Activated naive CD4-positive, alpha-beta T cell treated with anti-CD3 and anti-CD28 coated beads for 36 hours (primary cell): ENCODE measurements at regions of chr2 and their contacts with region 1.

Region 1: GRCh38 chr2:179031731-179032408 is 18.1 kb downstream of the CCDC141 start:
- DNase-seq: peak; percentile 71
- H3K4me3 Mint-ChIP-seq: peak overlapping the region; percentile 61
- H3K27ac Mint-ChIP-seq: peak overlapping the region; percentile 87
- H3K4me1 Mint-ChIP-seq: peaks cover 32% of the 10 kb centered on the region
- H3K27me3 Mint-ChIP-seq: no peaks in the 10 kb centered on the region

Region 2: DNA sequence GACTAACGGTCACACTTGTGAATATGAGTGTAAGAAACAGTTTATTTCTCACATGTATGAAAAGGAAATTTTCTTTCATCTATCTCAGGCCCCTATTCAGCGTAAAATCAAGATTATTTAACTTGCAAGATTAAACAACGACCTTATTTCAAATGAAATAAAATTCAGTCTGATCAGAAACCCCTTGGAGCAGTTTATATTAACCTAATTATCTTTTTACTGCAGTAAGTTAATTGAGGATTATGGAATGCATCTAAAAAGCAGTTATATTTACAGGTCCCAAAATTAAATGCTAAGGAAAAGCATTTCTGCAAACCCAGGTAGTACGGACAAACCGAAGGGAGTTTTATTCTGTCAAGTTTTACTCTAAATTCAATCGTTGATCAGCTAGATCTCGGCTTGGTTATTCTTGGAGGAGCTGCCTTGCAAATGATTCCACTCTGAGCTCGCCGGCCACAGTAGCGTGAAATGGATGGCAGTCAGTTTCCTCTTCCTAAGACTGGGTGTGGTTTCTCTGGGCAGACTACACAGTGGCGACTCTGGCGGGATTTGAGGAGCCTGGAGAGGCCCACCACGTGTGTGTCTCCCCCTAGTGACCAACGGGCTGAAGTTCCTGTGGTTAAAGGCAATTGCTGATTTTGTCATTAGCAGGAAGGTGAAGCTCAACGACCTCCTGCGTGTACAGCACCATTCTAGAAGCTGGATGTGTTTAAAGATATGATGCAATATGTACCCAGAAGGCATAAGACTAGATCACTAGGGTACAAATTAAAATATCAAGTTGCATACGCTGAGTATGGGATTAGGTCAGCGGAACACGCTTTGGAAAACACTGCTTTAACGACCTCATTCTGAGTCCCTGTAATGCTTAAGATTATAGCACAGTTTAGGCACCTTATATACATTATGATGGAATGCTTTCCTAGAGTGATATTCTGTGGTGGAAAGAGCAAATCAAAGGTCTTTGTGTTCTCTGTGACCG is 617.3 kb before region 1 on chr2:
- CTCF ChIA-PET with region 1: no interaction called
- intact Hi-C with region 1: loop called (anchors 5 kb)
- DNase-seq: peak; percentile 93
- H3K4me3 Mint-ChIP-seq: peak overlapping the region; percentile 79
- H3K27ac Mint-ChIP-seq: peak overlapping the region; percentile 90
- H3K4me1 Mint-ChIP-seq: peaks cover 12% of the 10 kb centered on the region
- H3K27me3 Mint-ChIP-seq: no peaks in the 10 kb centered on the region

Region 3: GRCh38 chr2:178514664-178515063 is 517.2 kb before region 1 on chr2:
- CTCF ChIA-PET with region 1: interaction called, 3 read pairs
- intact Hi-C with region 1: loop called (anchors 1 kb)
- DNase-seq: peak; percentile 69
- H3K4me3 Mint-ChIP-seq: no peak overlapping the region
- H3K27ac Mint-ChIP-seq: peak overlapping the region; percentile 65
- H3K4me1 Mint-ChIP-seq: peaks cover 25% of the 10 kb centered on the region
- H3K27me3 Mint-ChIP-seq: no peaks in the 10 kb centered on the region

Region 4: DNA sequence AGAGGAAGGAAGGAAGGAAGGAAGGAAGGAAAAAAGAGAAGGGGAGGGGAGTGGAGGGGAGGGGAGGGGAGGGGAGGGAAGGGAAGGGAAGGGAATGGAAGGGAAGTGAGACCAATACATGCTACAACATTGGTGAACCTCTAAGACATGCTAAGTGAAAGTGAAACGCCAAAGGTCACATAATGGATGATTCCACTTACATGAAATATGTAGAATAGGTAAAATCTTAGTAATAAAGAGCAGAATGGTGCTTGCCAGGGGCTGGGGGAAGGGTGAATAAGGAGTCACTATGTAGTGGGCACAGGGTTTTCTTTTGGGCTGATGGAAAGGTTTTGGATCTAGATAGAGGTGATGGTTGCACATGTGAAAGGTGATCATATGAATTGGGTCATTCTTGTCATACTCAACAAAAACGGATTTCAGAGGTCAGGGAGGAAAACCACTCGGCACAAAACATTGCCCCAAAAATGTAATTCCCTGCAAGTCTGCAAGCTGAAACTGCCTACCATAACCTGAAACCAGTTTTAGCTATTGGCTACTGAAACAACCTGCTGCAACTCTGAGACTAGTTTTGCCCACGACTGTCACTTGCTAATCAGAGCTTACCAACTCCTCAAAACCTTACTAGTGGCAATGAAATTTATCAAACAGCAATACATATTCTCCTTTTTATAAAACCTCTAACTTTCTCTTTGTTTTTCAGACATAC is 41.2 kb before region 1 on chr2:
- CTCF ChIA-PET with region 1: no interaction called
- intact Hi-C with region 1: loop called (anchors 1 kb)
- DNase-seq: peak; percentile 23
- H3K4me3 Mint-ChIP-seq: no peak overlapping the region
- H3K27ac Mint-ChIP-seq: no peak overlapping the region
- H3K4me1 Mint-ChIP-seq: peaks cover 10% of the 10 kb centered on the region
- H3K27me3 Mint-ChIP-seq: no peaks in the 10 kb centered on the region

Region 5: GRCh38 chr2:179049546-179050311 is 17.9 kb after region 1 on chr2 and contains the start of gene CCDC141:
- CTCF ChIA-PET with region 1: interaction called, 7 read pairs
- intact Hi-C with region 1: loop called (anchors 1 kb)
- DNase-seq: peak; percentile 50
- H3K4me3 Mint-ChIP-seq: peak within 1 kb of the TSS; percentile 86
- H3K27ac Mint-ChIP-seq: peak within 1 kb of the TSS; percentile 81
- H3K4me1 Mint-ChIP-seq: peaks cover 55% of the 10 kb centered on the region
- H3K27me3 Mint-ChIP-seq: no peaks in the 10 kb centered on the region
- total RNA-seq, gene CCDC141: 2.6 to 4.6 TPM

Region 6: GRCh38 chr2:179239195-179239594 is 207.3 kb after region 1 on chr2:
- CTCF ChIA-PET with region 1: no interaction called
- intact Hi-C with region 1: loop called (anchors 2 kb)
- DNase-seq: no peak
- H3K4me3 Mint-ChIP-seq: no peak overlapping the region
- H3K27ac Mint-ChIP-seq: no peak overlapping the region
- H3K4me1 Mint-ChIP-seq: peaks cover 27% of the 10 kb centered on the region
- H3K27me3 Mint-ChIP-seq: peaks cover 2% of the 10 kb centered on the region

Region 7: DNA sequence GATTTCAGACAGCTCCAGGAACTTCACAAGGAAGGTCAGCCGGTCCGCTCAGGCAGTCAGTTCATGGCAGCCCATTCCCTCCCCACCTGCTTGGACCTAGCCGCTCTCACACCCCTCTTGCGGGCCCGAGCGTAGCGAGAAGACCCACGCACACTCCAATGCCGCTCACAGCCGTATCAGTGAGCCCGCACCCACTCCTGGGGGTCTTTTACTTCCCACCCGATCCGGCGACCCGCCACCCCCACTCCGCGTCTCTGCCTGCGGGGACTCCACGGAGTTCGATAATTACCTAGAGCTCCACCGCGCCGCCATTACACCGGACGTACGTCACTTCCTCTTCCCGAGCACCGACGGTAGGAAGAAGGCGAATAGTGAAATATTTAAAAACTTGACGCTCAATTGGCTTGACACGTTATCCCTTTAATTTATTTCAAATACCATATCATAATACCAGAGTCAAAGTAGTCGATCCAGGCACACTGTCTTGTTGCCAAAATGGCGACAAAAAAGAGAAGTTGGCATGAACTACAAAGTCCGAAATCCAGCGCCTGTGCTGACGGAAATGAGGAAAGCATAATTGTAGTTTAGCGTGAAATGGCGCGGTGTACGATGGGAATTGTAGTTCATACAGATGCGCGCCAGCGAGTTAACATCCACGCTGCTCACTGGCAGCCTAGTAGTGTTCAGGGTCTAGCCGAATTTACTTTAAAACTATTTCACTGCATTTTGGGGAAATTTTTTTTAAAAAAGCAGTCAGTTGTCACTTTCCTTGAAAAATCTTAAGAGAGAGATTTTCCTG is 975.1 kb after region 1 on chr2 and contains the start of gene CWC22:
- CTCF ChIA-PET with region 1: no interaction called
- intact Hi-C with region 1: loop called (anchors 10 kb)
- DNase-seq: peak; percentile 93
- H3K4me3 Mint-ChIP-seq: peak within 1 kb of the TSS; percentile 92
- H3K27ac Mint-ChIP-seq: peak within 1 kb of the TSS; percentile 100
- H3K4me1 Mint-ChIP-seq: peaks cover 36% of the 10 kb centered on the region
- H3K27me3 Mint-ChIP-seq: no peaks in the 10 kb centered on the region
- total RNA-seq, gene CWC22: 20.4 TPM